ENCODE measurements at regions of chr14 and their contacts with region 1.

Region 1: DNA sequence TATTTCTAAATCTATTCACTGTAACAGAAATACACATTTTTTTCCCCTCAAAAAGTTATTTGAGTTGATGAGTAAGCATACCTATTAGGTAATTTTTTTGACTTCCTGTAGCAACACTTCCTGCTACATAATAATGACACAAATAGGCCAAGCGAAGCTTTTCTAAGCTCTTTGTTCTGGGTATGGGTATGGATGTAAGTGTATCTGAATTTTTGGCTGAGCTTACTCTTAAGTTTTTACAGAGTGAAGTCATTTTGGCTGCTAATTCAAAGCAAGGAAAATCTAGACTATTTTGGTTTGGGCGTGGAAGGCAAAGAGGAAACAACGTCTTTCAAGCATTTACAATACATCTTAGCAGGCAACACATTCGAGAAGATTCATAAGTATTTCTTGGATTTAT is 1206.0 kb upstream of the FLRT2 start:
- DNase-seq: no peak
- H3K4me3 ChIP-seq: no peak overlapping the region
- H3K27me3 ChIP-seq: no peaks in the 10 kb centered on the region
- CTCF ChIP-seq: no peak

Region 2: DNA sequence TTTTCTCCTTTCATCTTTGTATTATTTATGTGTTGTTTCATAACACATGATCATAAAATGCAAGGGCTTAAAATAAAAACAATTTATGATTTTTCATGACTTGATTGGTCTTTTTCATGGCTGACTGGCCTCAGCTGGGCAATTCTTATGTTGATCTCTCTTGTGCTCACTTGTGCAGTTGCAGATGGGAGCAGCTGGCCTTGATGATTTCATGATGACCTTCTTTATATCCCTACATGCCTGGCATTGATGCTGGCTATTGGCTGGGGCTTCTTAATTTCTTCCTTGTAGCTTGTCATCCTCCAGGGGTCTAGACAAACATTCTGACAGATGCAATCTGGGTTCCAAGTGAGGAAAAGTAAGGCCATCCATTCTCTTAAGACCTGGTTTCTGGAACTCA is 626.9 kb before region 1 on chr14:
- CTCF ChIA-PET with region 1: no interaction called
- POLR2A ChIA-PET with region 1: interaction called, 15 read pairs
- DNase-seq: no peak
- H3K4me3 ChIP-seq: no peak overlapping the region
- H3K27me3 ChIP-seq: no peaks in the 10 kb centered on the region
- CTCF ChIP-seq: no peak